Heart left ventricle (tissue), 16 donors: ENCODE measurements at regions of chr6 and their contacts with region 1.

Region 1: DNA sequence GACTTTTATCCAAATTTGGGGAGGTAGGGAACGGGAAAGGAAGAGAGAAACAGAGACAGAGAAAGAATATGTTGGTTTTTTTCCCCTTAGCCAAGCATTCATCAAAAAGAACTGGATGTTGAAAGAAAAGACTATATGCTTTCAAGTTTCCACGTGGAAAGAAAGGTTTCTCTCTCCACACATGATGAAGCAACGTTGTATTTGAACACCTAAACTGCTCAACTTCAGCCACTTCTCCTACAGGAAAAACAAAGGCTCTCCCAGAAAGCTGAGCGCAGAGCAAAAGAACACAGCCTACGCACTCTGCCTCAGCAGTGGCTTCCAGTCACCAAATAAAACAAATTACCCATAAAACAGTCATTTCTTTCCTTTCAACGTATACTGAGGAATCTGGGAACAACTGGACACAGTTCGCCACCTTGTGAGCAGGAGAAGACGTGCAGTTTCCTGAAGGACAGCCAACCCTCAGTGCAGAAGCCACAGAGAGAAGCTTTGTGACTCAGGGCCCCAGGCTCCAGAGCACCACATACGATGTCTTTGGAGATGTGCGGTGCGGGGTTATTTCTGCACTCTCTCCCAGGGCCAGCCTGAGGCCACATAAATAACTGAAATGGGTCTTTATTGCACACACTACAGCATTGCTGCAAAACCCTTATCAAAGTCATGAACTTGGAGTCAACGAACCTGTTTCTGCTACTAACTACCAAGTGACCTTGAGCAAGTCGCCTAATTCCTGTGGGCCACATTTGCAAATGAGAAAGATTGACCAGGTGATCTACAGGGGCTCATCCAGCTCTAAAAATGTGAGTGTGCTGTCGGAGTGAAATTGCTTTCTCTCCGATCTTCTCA is 10.1 kb downstream of the IL17F start:
- DNase-seq: no peak
- ATAC-seq: peak in 2 of 4 donors; percentile 37 to 44
- H3K4me3 ChIP-seq: no peak overlapping the region
- H3K27ac ChIP-seq: no peak overlapping the region
- H3K4me1 ChIP-seq: no peaks in the 10 kb centered on the region
- H3K27me3 ChIP-seq: peaks cover 0 to 10% (median 0%) of the 10 kb centered on the region in 9 donors
- CTCF ChIP-seq: peak in 11 of 12 donors; percentile 16 to 52 (median 38)
- POLR2A ChIP-seq: no peak

Region 2: DNA sequence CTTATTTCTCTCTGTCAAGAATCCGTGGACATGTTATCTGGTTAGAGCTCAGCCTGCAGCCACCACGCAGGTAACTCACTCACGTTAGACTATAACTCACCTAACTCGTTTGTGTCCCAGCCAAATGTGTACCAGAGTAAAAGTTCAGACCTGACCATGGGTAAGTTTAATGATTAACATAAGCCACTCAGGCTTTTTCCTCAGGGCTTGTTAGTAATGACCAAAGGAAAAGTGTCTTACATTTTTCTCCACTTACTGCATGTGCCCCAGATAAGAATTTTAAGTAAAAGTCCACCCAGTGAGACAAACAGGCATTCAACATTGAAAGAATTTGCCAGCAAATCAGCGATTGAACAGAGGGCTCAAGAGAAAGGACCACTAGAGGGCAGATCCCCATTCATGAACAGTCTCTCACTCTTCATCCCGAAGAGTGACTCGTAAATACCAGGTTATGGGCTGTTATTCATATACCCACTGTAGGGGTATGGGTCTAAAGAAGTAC is 146.7 kb before region 1 on chr6 and contains the start of gene PKHD1:
- intact Hi-C with region 1: loop called in 1 of 10 experiments (anchors 10 kb)
- DNase-seq: no peak
- ATAC-seq: no peak
- H3K4me3 ChIP-seq: no peak within 1 kb of the TSS
- H3K27ac ChIP-seq: no peak within 1 kb of the TSS
- H3K4me1 ChIP-seq: no peaks in the 10 kb centered on the region
- H3K27me3 ChIP-seq: peaks cover 0 to 6% (median 0%) of the 10 kb centered on the region in 9 donors
- CTCF ChIP-seq: peak in 7 of 12 donors; percentile 9 to 35 (median 16)
- POLR2A ChIP-seq: no peak
- total RNA-seq, gene PKHD1: 0.02 to 0.04 TPM in 2 of 9 donors, not detected in the others

Region 3: GRCh38 chr6:52162940-52163908 is 71.0 kb before region 1 on chr6:
- intact Hi-C with region 1: loop called in 2 of 10 experiments (anchors 2 to 10 kb)
- DNase-seq: no peak
- ATAC-seq: no peak
- H3K4me3 ChIP-seq: no peak overlapping the region
- H3K27ac ChIP-seq: no peak overlapping the region
- H3K4me1 ChIP-seq: no peaks in the 10 kb centered on the region
- H3K27me3 ChIP-seq: peaks cover 0 to 5% (median 0%) of the 10 kb centered on the region in 9 donors
- CTCF ChIP-seq: peak; percentile 19 to 57 (median 38)
- POLR2A ChIP-seq: no peak